AG04450 (cell line): ENCODE measurements at regions of chr1 and their contacts with region 1.

Region 1: GRCh38 chr1:86018283-86018923 is 138.2 kb downstream of the COL24A1 start:
- DNase-seq: no peak
- H3K4me3 ChIP-seq: no peak overlapping the region
- H3K27ac ChIP-seq: no peak overlapping the region
- H3K27me3 ChIP-seq: no peaks in the 10 kb centered on the region
- CTCF ChIP-seq: peak; percentile 85

Region 2: GRCh38 chr1:85061711-85062424 is 956.5 kb before region 1 on chr1:
- CTCF ChIA-PET with region 1: interaction called, 12 read pairs
- POLR2A ChIA-PET with region 1: no interaction called
- DNase-seq: peak; percentile 95
- H3K4me3 ChIP-seq: peak overlapping the region; percentile 61
- H3K27ac ChIP-seq: peak overlapping the region; percentile 68
- H3K27me3 ChIP-seq: no peaks in the 10 kb centered on the region
- CTCF ChIP-seq: no peak

Region 3: DNA sequence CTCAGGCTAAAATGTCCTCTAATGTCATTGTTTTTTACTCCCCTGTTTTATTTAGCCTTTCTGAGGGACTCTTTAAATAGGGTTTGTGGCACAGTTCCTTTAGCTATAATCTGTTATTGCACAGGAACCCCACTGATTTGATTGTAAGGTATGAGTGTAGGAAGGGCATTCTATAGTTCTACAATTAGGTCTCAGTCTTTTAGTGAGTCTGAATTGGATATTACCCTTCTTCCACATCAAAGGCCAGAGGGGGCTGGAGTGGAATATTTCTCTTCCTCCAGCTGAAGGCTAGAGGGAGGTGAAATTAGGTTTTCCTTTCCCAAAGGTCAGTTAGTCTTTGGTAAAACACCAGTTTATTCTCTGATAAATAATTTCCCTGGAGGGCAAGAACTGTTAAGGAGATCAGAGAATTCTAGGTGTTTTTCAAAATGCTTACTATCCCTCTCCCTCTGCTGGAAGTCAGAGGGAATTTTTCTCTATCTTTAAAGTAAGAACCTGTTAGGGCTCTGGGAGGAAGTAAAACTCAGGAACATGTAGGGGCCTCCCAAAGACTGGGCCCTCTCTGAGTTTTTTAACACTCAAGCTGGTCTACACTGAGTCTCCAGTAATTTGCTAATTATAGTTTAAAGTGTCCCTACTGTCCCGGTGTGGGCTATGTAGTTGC is 133.9 kb before region 1 on chr1:
- CTCF ChIA-PET with region 1: interaction called, 11 read pairs
- POLR2A ChIA-PET with region 1: no interaction called
- DNase-seq: no peak
- H3K4me3 ChIP-seq: no peak overlapping the region
- H3K27ac ChIP-seq: no peak overlapping the region
- H3K27me3 ChIP-seq: no peaks in the 10 kb centered on the region
- CTCF ChIP-seq: peak; percentile 74

Region 4: GRCh38 chr1:85992791-85993190 is 25.6 kb before region 1 on chr1:
- CTCF ChIA-PET with region 1: interaction called, 11 read pairs
- POLR2A ChIA-PET with region 1: no interaction called
- DNase-seq: peak; percentile 27
- H3K4me3 ChIP-seq: no peak overlapping the region; the same call in 1 of the 2 replicates
- H3K27ac ChIP-seq: no peak overlapping the region
- H3K27me3 ChIP-seq: no peaks in the 10 kb centered on the region
- CTCF ChIP-seq: no peak

Region 5: GRCh38 chr1:86035101-86035500 is 16.7 kb after region 1 on chr1:
- CTCF ChIA-PET with region 1: interaction called, 54 read pairs
- POLR2A ChIA-PET with region 1: no interaction called
- DNase-seq: no peak
- H3K4me3 ChIP-seq: no peak overlapping the region
- H3K27ac ChIP-seq: no peak overlapping the region
- H3K27me3 ChIP-seq: no peaks in the 10 kb centered on the region
- CTCF ChIP-seq: no peak

Region 6: GRCh38 chr1:86289161-86289560 is 270.8 kb after region 1 on chr1:
- CTCF ChIA-PET with region 1: no interaction called
- POLR2A ChIA-PET with region 1: no interaction called
- DNase-seq: no peak
- H3K4me3 ChIP-seq: no peak overlapping the region
- H3K27ac ChIP-seq: no peak overlapping the region
- H3K27me3 ChIP-seq: no peaks in the 10 kb centered on the region
- CTCF ChIP-seq: no peak